B cell (primary cell): ENCODE measurements at regions of chr1 and their contacts with region 1.

Region 1: DNA sequence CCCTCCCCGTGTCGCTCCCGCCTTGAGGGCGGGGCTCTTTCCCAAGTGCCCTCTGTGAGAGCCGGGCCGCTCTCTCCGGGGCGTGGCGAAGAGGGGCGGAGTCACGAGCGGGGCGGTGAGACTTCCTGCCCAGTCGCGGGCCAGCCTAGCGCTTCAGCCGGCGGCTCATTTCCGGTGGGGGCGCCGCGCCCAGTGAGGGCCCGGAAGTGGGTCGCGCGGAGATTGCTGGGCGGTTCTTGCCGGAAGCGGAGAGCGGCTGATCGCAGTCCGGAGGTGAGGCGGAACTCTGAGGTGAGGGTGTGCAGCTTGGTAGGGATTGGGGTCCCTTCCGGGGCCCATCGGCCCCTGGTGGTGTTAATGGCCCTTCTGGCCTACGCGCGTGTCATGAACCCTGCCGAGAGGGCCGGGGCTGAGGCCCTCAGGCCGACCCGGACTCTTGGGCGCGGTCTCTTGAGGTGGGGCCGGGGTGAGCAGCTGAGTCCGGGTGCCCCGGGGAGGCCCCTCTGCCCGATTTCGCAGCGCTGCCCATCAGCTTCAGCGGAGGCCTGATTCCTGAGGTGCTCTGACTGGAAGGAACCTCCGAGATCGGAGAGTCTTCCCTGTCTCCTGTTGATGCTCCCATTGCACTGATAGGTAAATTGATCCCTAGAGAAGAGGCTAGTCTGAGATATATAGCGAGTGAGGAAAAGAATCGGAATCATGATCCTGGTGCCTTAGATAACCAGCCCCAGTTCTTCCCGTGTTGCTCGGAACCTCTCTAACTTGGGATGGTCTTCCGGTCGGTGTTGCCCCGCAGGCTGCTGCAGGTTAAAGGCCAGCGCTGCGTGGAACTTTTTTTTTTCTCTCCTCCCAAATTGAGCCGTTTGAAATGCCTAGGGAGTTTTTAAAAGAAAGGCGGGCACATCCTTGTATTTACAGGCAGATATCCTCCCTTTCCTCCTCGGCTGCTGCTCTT is at the start of gene CAP1:
- DNase-seq: peak; percentile 100
- ATAC-seq: peak; percentile 86
- H3K4me3 ChIP-seq: peak within 1 kb of the TSS; percentile 88 to 100 (median 97)
- H3K4me3 Mint-ChIP-seq: peak within 1 kb of the TSS; percentile 99
- H3K27ac ChIP-seq: peak within 1 kb of the TSS; percentile 91 to 98
- H3K27ac Mint-ChIP-seq: peak within 1 kb of the TSS; percentile 100
- H3K4me1 ChIP-seq: peaks cover 70 to 83% of the 10 kb centered on the region in 2 donors
- H3K4me1 Mint-ChIP-seq: peaks cover 71% of the 10 kb centered on the region
- H3K27me3 ChIP-seq: no peaks in the 10 kb centered on the region
- H3K27me3 Mint-ChIP-seq: no peaks in the 10 kb centered on the region
- CTCF ChIP-seq: no peak
- total RNA-seq, gene CAP1: 195 and 203 TPM in 2 replicates

Region 2: DNA sequence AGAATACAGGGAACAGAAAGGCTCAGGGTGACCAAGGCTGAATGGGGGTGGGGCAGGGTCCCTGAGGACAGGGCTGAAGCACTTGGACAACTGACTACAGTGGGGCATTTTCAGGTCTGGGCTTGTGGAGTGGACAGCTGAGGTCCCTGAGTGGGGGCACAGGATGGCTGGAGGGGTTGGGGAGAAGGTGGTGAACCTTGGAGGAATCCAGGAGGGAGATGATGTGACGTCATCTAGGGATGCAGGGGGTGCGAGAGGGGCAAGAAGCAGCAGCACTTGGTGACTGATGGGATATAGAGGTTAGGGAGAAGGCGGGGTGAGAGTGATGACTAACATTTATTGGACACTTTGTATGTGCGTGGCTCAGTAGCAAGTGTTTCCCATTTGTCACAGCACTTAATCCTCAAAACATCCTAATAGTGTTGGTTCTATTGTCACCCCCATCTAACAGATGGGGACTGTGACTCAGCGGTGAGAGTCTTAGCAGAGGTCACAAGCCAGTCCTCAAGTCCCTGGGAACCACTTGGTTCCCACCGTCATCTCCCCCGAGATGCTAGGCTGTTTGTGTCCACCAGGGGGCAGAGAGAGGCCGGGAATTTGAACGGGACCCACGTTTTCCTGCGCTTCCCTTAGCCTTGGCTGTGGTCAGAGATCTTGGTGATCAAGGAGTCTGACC is 224.2 kb before region 1 on chr1:
- CTCF ChIA-PET with region 1: interaction called, 11 read pairs
- POLR2A ChIA-PET with region 1: no interaction called
- intact Hi-C with region 1: no loop called
- DNase-seq: peak; percentile 80
- ATAC-seq: peak; percentile 61
- H3K4me3 ChIP-seq: peak overlapping the region in 4 of 5 experiments; percentile 25 to 45 (median 28)
- H3K4me3 Mint-ChIP-seq: peak overlapping the region; percentile 78
- H3K27ac ChIP-seq: no peak overlapping the region
- H3K27ac Mint-ChIP-seq: peak overlapping the region; percentile 38
- H3K4me1 ChIP-seq: peaks cover 6 to 15% of the 10 kb centered on the region in 2 donors
- H3K4me1 Mint-ChIP-seq: peaks cover 10% of the 10 kb centered on the region
- H3K27me3 ChIP-seq: no peaks in the 10 kb centered on the region
- H3K27me3 Mint-ChIP-seq: no peaks in the 10 kb centered on the region
- CTCF ChIP-seq: peak; percentile 78

Region 3: DNA sequence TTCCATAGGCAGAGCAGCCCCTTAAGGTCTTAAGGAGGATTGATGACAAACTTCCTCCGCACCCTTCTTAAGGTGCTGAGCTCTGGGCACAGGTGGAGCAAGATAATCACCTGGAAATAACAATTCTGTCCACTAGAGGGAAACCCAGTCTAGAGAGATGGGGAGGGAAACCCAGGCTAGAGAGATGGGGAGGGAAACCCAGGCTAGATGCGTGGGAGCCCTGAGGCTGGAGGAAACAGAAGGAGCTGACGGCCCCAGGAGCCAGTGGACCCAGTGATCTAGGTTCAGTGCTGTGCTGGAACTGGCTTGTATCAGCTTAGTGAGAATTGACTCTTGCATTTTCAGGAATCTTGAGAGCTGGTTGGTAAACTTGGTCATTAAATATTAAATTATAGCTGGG is 121.2 kb before region 1 on chr1:
- CTCF ChIA-PET with region 1: interaction called, 161 read pairs
- POLR2A ChIA-PET with region 1: no interaction called
- intact Hi-C with region 1: no loop called
- DNase-seq: peak; percentile 83
- ATAC-seq: peak; percentile 98
- H3K4me3 ChIP-seq: no peak overlapping the region
- H3K4me3 Mint-ChIP-seq: no peak overlapping the region
- H3K27ac ChIP-seq: no peak overlapping the region
- H3K27ac Mint-ChIP-seq: no peak overlapping the region
- H3K4me1 ChIP-seq: peaks cover 0 to 4% of the 10 kb centered on the region in 2 donors
- H3K4me1 Mint-ChIP-seq: no peaks in the 10 kb centered on the region
- H3K27me3 ChIP-seq: no peaks in the 10 kb centered on the region
- H3K27me3 Mint-ChIP-seq: peaks cover 8% of the 10 kb centered on the region
- CTCF ChIP-seq: peak; percentile 75

Region 4: GRCh38 chr1:40064797-40065499 is 24.2 kb after region 1 on chr1:
- CTCF ChIA-PET with region 1: interaction called, 11 read pairs
- POLR2A ChIA-PET with region 1: interaction called, 24 read pairs
- intact Hi-C with region 1: loop called (anchors 1 kb)
- DNase-seq: peak; percentile 84
- ATAC-seq: peak; percentile 91
- H3K4me3 ChIP-seq: peak overlapping the region in 4 of 5 experiments; percentile 9 to 30 (median 17)
- H3K4me3 Mint-ChIP-seq: peak overlapping the region; percentile 77
- H3K27ac ChIP-seq: peak overlapping the region; percentile 77 to 87
- H3K27ac Mint-ChIP-seq: peak overlapping the region; percentile 96
- H3K4me1 ChIP-seq: peaks cover 67 to 68% of the 10 kb centered on the region in 2 donors
- H3K4me1 Mint-ChIP-seq: peaks cover 63% of the 10 kb centered on the region
- H3K27me3 ChIP-seq: no peaks in the 10 kb centered on the region
- H3K27me3 Mint-ChIP-seq: no peaks in the 10 kb centered on the region
- CTCF ChIP-seq: no peak

Region 5: DNA sequence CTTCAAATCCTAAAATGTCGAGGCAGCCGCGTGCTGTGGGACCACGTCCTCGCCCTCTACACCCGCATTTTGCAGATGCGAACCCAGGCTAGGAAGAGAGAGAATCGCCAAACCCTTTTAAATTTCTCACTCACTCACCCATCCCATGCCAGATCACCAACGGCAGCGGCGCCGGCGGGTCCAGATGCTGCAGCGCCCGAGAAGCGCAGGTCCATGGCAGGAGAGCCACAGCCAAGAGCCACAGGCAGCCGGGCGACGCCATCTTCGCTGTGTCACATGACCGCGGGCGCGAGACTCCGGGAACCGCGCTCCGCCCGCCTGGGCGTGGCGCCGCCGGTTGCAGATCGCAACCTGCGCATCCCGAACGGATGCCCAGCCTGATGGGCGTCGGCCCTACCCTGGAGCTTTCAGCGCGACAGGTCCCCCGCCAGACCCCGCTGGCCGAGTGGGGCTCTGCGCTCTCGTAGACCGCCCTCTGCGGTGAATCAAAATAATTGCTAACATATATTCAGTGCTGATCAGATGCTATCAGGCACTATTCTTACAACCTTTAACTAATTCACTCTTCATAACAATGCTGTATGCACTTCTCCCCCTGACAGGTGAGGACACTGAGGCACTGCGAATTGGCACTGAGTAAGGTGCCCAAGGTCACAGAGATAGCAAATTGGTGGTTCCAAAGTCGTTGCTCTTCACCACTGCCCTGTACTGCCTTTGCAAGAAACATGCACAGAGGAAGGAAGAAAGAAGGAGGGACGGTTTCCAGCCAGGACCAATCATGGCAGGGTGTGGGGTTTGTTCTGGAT is 56.4 kb after region 1 on chr1 and contains the start of gene PPT1:
- CTCF ChIA-PET with region 1: interaction called, 5 read pairs
- POLR2A ChIA-PET with region 1: no interaction called
- intact Hi-C with region 1: loop called (anchors 2 kb)
- DNase-seq: peak; percentile 86
- ATAC-seq: peak; percentile 92
- H3K4me3 ChIP-seq: peak within 1 kb of the TSS; percentile 69 to 80 (median 79)
- H3K4me3 Mint-ChIP-seq: peak within 1 kb of the TSS; percentile 88
- H3K27ac ChIP-seq: peak within 1 kb of the TSS; percentile 53 to 68
- H3K27ac Mint-ChIP-seq: peak within 1 kb of the TSS; percentile 92
- H3K4me1 ChIP-seq: peaks cover 14 to 20% of the 10 kb centered on the region in 2 donors
- H3K4me1 Mint-ChIP-seq: peaks cover 19% of the 10 kb centered on the region
- H3K27me3 ChIP-seq: no peaks in the 10 kb centered on the region
- H3K27me3 Mint-ChIP-seq: peaks cover 15% of the 10 kb centered on the region
- CTCF ChIP-seq: peak; percentile 61
- total RNA-seq, gene PPT1: 32.1 and 38.2 TPM in 2 replicates

Region 6: DNA sequence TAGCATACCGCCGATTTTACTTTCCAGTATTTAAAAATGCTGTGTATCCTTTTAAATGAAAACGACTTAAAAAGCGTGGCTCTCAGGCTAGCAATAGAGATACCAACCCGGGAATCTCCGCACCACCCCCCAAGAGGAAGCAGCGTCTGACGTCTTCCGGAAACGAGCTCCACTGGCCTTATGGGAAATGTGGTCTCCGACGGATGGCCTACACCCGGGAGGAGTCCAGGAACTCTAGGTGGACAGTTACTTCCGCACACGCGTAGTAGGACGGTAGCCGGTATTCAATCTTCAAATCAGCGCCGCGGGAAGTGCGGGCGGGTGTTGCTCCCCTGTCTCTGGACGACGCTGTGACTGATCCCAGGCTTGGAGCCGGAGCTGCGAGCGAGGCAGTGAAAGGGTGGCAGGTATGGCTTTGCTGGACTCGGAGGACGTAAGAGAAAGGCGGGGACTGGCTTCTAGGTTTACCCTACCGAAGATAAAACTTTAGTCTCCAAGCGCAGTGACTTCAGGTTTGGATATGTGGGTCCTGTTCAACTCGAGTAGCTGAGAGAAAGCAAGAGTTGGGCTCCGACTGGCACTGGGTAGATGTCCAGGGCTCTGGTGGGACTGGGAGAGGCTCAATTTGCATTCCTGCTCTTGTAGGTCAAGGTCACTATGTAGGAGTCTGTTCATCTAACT is 490.7 kb after region 1 on chr1 and contains the start of gene ZNF684:
- CTCF ChIA-PET with region 1: no interaction called
- POLR2A ChIA-PET with region 1: no interaction called
- intact Hi-C with region 1: loop called (anchors 1 kb)
- DNase-seq: peak; percentile 91
- ATAC-seq: peak; percentile 98
- H3K4me3 ChIP-seq: peak within 1 kb of the TSS; percentile 50 to 94 (median 80)
- H3K4me3 Mint-ChIP-seq: peak within 1 kb of the TSS; percentile 100
- H3K27ac ChIP-seq: peak within 1 kb of the TSS; percentile 60 to 92
- H3K27ac Mint-ChIP-seq: peak within 1 kb of the TSS; percentile 96
- H3K4me1 ChIP-seq: peaks cover 19 to 22% of the 10 kb centered on the region in 2 donors
- H3K4me1 Mint-ChIP-seq: peaks cover 26% of the 10 kb centered on the region
- H3K27me3 ChIP-seq: peaks cover 0 to 3% (median 1%) of the 10 kb centered on the region in 4 experiments
- H3K27me3 Mint-ChIP-seq: peaks cover 5% of the 10 kb centered on the region
- CTCF ChIP-seq: no peak
- total RNA-seq, gene ZNF684: 6.3 and 7.4 TPM in 2 replicates